SK-N-SH (cell line): ENCODE measurements at regions of chr2 and their contacts with region 1.

Region 1: GRCh38 chr2:218852911-218853667 is 6.5 kb upstream of the WNT6 start:
- DNase-seq: peak; percentile 74
- H3K4me3 ChIP-seq: no peak overlapping the region; a peak in 1 of 4 replicates
- H3K27ac ChIP-seq: no peak overlapping the region
- H3K4me1 ChIP-seq: peaks cover 3 to 43% of the 10 kb centered on the region in 2 experiments; a peak in 2 of 4 replicates
- H3K27me3 ChIP-seq: peaks cover 9% of the 10 kb centered on the region; the same call in 1 of the 2 replicates
- CTCF ChIP-seq: peak; percentile 81
- EP300 ChIP-seq: no peak
- RAD21 ChIP-seq: peak; percentile 95

Region 2: GRCh38 chr2:218691234-218691633 is 161.9 kb before region 1 on chr2:
- CTCF ChIA-PET with region 1: interaction called, 40 read pairs
- POLR2A ChIA-PET with region 1: no interaction called
- DNase-seq: no peak
- H3K4me3 ChIP-seq: no peak overlapping the region
- H3K27ac ChIP-seq: peak overlapping the region in 1 of 2 experiments; percentile 44; a peak in 1 of 4 replicates
- H3K4me1 ChIP-seq: no peaks in the 10 kb centered on the region; a peak in 1 of 4 replicates
- H3K27me3 ChIP-seq: no peaks in the 10 kb centered on the region
- CTCF ChIP-seq: no peak
- EP300 ChIP-seq: no peak
- RAD21 ChIP-seq: no peak

Region 3: GRCh38 chr2:218722876-218723785 is 130.0 kb before region 1 on chr2:
- CTCF ChIA-PET with region 1: interaction called, 15 read pairs
- POLR2A ChIA-PET with region 1: no interaction called
- DNase-seq: no peak
- H3K4me3 ChIP-seq: no peak overlapping the region
- H3K27ac ChIP-seq: no peak overlapping the region
- H3K4me1 ChIP-seq: peaks cover 0 to 2% of the 10 kb centered on the region in 2 experiments; a peak in 1 of 4 replicates
- H3K27me3 ChIP-seq: no peaks in the 10 kb centered on the region
- CTCF ChIP-seq: no peak
- EP300 ChIP-seq: no peak
- RAD21 ChIP-seq: no peak

Region 4: GRCh38 chr2:218829868-218830451 is 23.1 kb before region 1 on chr2:
- CTCF ChIA-PET with region 1: interaction called, 12 read pairs
- POLR2A ChIA-PET with region 1: no interaction called
- DNase-seq: no peak
- H3K4me3 ChIP-seq: no peak overlapping the region
- H3K27ac ChIP-seq: no peak overlapping the region
- H3K4me1 ChIP-seq: peaks cover 0 to 10% of the 10 kb centered on the region in 2 experiments; a peak in 2 of 4 replicates
- H3K27me3 ChIP-seq: no peaks in the 10 kb centered on the region; the same call in 1 of the 2 replicates
- CTCF ChIP-seq: no peak
- EP300 ChIP-seq: no peak
- RAD21 ChIP-seq: no peak

Region 5: GRCh38 chr2:218876562-218877219 is 23.6 kb after region 1 on chr2:
- CTCF ChIA-PET with region 1: interaction called, 249 read pairs
- POLR2A ChIA-PET with region 1: interaction called, 4 read pairs
- DNase-seq: peak; percentile 88
- H3K4me3 ChIP-seq: no peak overlapping the region
- H3K27ac ChIP-seq: peak overlapping the region in 1 of 2 experiments; percentile 78; a peak in 2 of 4 replicates
- H3K4me1 ChIP-seq: peaks cover 0 to 54% of the 10 kb centered on the region in 2 experiments; a peak in 2 of 4 replicates
- H3K27me3 ChIP-seq: peaks cover 39% of the 10 kb centered on the region
- CTCF ChIP-seq: peak; percentile 95
- EP300 ChIP-seq: peak in 1 of 2 experiments; percentile 26; a peak in 1 of 4 replicates
- RAD21 ChIP-seq: peak; percentile 95

Region 6: GRCh38 chr2:218908721-218909619 is 55.9 kb after region 1 on chr2:
- CTCF ChIA-PET with region 1: interaction called, 11 read pairs
- POLR2A ChIA-PET with region 1: no interaction called
- DNase-seq: peak; percentile 93
- H3K4me3 ChIP-seq: peak overlapping the region; percentile 60 to 61
- H3K27ac ChIP-seq: peak overlapping the region in 1 of 2 experiments; percentile 84; a peak in 2 of 4 replicates
- H3K4me1 ChIP-seq: peaks cover 10 to 11% of the 10 kb centered on the region in 2 experiments
- H3K27me3 ChIP-seq: no peaks in the 10 kb centered on the region
- CTCF ChIP-seq: no peak
- EP300 ChIP-seq: no peak
- RAD21 ChIP-seq: no peak